ENCODE measurements at regions of chr1 and their contacts with region 1.

Region 1: GRCh38 chr1:228165372-228166169 is at the start of gene IBA57:
- DNase-seq: peak; percentile 100
- ATAC-seq: peak; percentile 84 to 88 (median 86)
- H3K4me3 ChIP-seq: peak within 1 kb of the TSS; percentile 75
- H3K27ac ChIP-seq: peak within 1 kb of the TSS; percentile 99
- H3K4me1 ChIP-seq: peaks cover 35% of the 10 kb centered on the region
- H3K27me3 ChIP-seq: no peaks in the 10 kb centered on the region
- CTCF ChIP-seq: peak; percentile 85
- total RNA-seq, gene IBA57: 11.3 to 26.2 (median 17.8) TPM

Region 2: GRCh38 chr1:228131766-228132165 is 33.8 kb before region 1 on chr1:
- intact Hi-C with region 1: loop called in 1 of 2 experiments (anchors 5 kb)
- DNase-seq: no peak
- ATAC-seq: no peak
- H3K4me3 ChIP-seq: no peak overlapping the region
- H3K27ac ChIP-seq: no peak overlapping the region
- H3K4me1 ChIP-seq: no peaks in the 10 kb centered on the region
- H3K27me3 ChIP-seq: no peaks in the 10 kb centered on the region
- CTCF ChIP-seq: no peak

Region 3: DNA sequence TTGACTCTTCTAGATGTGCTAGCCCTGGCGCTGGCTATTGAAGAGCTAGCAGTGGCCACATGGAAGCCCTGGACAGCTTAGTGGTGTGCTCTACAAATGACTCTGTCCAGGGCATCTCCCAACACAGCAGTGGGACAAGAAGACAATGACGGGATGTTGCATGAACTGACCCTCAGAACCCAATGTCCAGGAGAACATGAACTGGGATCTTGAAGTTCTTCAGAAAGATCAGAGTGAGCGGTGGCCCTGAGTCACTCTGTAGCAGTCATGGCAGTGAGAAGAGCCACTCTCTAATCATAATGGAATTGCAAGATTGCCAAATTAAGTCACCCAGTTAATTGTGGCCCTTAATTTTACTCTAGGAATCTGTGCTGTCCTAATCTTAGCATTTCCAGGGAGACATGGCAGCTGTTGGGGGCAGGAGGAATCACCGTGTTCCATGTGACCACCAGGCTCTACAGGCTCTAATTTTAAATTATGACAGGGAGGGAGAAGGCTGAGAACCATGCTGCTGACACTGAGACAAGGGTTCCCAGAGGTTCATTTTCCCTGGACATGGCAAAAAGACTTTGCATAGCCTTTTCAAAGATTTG is 32.1 kb after region 1 on chr1:
- intact Hi-C with region 1: loop called in 1 of 2 experiments (anchors 2 kb)
- DNase-seq: peak in 1 of 2 donors; percentile 81
- ATAC-seq: peak; percentile 92 to 98 (median 94)
- H3K4me3 ChIP-seq: no peak overlapping the region
- H3K27ac ChIP-seq: peak overlapping the region; percentile 92
- H3K4me1 ChIP-seq: peaks cover 18% of the 10 kb centered on the region
- H3K27me3 ChIP-seq: no peaks in the 10 kb centered on the region
- CTCF ChIP-seq: no peak

Region 4: DNA sequence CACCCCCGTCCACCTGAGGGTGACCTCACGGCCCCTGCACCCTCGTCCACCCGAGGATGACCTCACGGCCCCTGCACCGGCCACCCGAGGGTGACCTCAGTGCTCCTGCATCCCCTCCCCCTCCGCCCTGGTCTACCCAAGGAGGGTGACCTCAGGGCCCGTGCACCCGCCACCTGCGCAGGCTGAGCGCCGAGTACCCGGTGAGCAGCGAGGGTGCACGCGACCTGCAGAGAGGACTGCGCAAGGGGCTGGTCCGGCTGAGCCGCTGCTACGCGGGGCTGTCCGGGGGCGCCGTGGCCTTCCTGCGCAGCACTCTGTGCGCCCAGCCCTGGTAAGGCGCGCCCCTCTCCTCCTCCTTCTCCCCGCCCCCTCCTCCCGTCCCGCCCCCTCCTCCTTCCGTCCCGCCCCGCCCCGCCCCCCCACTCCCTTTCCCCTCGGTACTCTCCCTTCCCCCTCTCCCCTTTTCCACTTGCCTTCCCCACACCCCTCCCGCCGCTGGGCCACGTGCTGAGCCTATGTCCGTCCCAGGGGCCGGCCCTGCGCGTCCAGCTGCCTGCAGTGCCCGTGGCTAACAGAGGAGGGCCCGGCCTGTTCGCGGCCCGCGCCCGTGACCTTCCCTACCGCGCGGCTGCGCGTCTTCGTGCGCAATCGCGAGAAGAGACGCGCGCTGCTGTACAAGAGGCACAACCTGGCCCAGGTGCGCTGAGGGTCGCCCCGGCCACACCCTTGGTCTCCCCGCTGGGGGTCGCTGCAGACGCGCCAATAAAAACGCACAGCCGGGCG is 212.7 kb after region 1 on chr1:
- intact Hi-C with region 1: no loop called
- DNase-seq: peak; percentile 74 to 81
- ATAC-seq: peak in 2 of 4 donors; percentile 2 to 4
- H3K4me3 ChIP-seq: peak overlapping the region; percentile 58
- H3K27ac ChIP-seq: no peak overlapping the region
- H3K4me1 ChIP-seq: peaks cover 7% of the 10 kb centered on the region
- H3K27me3 ChIP-seq: no peaks in the 10 kb centered on the region
- CTCF ChIP-seq: peak; percentile 41

Region 5: GRCh38 chr1:228471762-228472398 is 306.3 kb after region 1 on chr1:
- intact Hi-C with region 1: no loop called
- DNase-seq: no peak
- ATAC-seq: peak in 2 of 4 donors; percentile 38 to 47
- H3K4me3 ChIP-seq: no peak overlapping the region
- H3K27ac ChIP-seq: no peak overlapping the region
- H3K4me1 ChIP-seq: no peaks in the 10 kb centered on the region
- H3K27me3 ChIP-seq: peaks cover 3 to 50% (median 17%) of the 10 kb centered on the region in 3 donors
- CTCF ChIP-seq: peak; percentile 29

Measured in psoas muscle (tissue), 8 donors.